Psoas muscle (tissue), 8 donors: ENCODE measurements at regions of chr9 and their contacts with region 1.

Region 1: DNA sequence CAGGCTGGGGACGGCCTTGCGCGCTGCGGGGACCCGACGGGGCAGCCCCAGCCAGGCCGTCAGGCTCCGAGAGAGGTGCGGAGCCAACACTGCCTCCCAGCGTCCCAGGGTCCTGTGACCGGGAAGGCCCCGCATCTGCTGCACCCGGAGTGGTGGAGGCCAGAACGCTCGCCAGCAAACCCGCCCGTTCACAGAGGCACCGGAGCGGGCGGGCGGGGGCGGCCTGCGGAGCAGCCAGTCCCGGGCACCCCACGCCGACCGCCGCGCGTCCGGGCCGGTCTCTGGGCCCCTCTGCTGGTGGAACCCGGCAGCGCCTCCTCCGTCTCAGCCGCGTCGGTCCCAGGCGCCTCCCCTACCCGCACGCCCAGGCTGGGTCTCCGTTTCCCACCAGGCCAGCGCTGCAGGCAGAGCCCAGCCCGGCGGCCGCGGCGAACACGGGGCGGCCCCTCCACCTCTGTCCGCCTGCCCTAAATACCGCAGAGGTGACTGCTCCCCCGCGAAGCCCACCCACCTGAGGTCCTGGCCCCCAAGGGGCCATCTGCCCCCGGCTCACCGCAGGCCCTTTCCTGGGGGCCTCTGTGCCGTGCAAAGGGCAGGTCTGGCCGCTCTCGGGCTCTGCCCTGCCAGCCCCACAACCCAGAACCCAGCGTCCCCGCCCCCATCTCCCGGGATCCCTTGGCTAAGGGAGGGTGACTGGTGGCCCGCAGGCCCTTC is 15.9 kb downstream of the EXD3 start:
- DNase-seq: peak; percentile 77 to 81
- ATAC-seq: peak; percentile 82 to 90 (median 86)
- H3K4me3 ChIP-seq: peak overlapping the region; percentile 57
- H3K27ac ChIP-seq: peak overlapping the region; percentile 41
- H3K4me1 ChIP-seq: peaks cover 26% of the 10 kb centered on the region
- H3K27me3 ChIP-seq: peaks cover 0 to 7% (median 0%) of the 10 kb centered on the region in 3 donors
- CTCF ChIP-seq: peak; percentile 84

Region 2: DNA sequence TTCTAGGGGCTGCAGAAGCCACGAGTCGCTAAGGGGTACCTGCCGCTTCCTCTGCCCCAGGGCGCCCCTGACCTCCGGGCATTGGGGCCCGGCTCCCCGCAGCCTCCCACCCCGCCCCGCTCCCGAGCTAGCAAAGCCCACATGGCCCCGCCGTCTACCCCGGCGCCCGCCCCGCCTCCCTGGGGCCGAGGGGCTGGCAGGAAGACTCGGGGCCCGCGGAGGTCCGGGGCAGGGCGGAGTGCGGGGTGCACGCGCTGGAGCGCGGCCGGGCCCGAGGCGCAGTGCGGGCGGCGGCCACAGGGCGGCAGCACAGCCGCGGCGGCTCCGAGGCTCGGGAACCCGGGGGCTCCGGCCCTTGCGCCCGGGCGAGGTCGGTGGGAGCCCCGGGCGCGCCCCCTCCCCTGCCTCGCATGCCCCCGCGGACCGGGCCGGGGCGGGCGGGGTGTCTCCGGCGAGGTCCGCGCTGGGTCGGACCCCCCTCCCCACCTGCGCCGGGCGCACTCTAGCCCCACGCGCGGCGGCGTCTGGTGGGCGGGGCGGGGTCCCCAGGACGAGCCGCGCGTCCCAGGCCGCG is 111.7 kb before region 1 on chr9:
- intact Hi-C with region 1: loop called (anchors 2 to 5 kb)
- DNase-seq: no peak
- ATAC-seq: peak; percentile 55 to 78 (median 73)
- H3K4me3 ChIP-seq: peak overlapping the region; percentile 59
- H3K27ac ChIP-seq: peak overlapping the region; percentile 58
- H3K4me1 ChIP-seq: peaks cover under 1% of the 10 kb centered on the region
- H3K27me3 ChIP-seq: peaks cover 0 to 74% (median 32%) of the 10 kb centered on the region in 3 donors
- CTCF ChIP-seq: peak; percentile 77

Region 3: DNA sequence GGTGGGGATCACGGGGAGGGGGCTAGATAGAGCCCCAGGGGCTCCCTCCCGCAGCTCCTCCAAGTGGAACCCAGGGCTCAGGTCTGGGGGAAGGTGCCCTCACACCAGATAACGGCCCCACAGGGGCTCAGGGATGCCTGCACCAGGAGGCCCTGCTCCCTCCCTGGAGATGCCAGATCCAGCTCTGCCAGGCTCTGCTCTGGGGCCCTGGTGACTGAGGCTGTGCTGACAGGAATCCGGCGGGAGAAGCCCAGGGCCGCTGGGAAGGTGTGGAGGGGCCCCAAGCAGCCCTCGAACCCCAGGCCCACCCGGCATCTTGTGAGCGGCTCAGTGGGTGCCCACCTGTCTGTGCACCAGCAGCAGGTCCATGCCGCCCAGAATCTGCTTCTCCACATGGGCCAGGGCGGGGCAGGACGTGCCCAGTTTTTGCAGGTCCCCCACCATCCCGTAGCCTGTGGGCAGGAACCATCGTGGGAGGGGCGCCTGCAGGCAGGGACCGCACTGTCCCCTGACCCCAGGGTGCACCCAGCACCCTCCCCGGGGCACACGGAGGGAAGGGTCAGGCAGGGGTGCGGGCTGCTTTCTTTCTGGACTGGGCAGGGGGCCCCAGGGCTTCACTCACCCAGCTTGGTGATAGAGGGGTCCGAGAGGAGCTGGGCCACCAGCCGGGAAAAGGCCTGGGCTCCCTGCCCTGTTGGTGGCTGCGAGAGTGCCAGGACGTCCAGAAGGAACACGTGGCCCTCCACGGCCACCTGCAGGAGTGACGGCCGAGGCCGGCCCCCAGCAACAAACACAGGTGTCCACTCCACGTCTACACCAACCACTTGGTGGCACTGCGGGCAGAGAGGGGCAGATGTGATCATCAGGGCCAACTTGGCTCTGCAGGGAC is 56.1 kb before region 1 on chr9:
- intact Hi-C with region 1: loop called in 1 of 2 experiments (anchors 2 kb)
- DNase-seq: no peak
- ATAC-seq: peak in 1 of 4 donors; percentile 34
- H3K4me3 ChIP-seq: no peak overlapping the region
- H3K27ac ChIP-seq: no peak overlapping the region
- H3K4me1 ChIP-seq: no peaks in the 10 kb centered on the region
- H3K27me3 ChIP-seq: no peaks in the 10 kb centered on the region
- CTCF ChIP-seq: no peak

Region 4: GRCh38 chr9:137390543-137391410 is 16.3 kb before region 1 on chr9:
- intact Hi-C with region 1: no loop called
- DNase-seq: peak; percentile 42 to 70
- ATAC-seq: peak; percentile 60 to 92 (median 81)
- H3K4me3 ChIP-seq: no peak overlapping the region
- H3K27ac ChIP-seq: peak overlapping the region; percentile 38
- H3K4me1 ChIP-seq: peaks cover 7% of the 10 kb centered on the region
- H3K27me3 ChIP-seq: no peaks in the 10 kb centered on the region
- CTCF ChIP-seq: no peak

Region 5: DNA sequence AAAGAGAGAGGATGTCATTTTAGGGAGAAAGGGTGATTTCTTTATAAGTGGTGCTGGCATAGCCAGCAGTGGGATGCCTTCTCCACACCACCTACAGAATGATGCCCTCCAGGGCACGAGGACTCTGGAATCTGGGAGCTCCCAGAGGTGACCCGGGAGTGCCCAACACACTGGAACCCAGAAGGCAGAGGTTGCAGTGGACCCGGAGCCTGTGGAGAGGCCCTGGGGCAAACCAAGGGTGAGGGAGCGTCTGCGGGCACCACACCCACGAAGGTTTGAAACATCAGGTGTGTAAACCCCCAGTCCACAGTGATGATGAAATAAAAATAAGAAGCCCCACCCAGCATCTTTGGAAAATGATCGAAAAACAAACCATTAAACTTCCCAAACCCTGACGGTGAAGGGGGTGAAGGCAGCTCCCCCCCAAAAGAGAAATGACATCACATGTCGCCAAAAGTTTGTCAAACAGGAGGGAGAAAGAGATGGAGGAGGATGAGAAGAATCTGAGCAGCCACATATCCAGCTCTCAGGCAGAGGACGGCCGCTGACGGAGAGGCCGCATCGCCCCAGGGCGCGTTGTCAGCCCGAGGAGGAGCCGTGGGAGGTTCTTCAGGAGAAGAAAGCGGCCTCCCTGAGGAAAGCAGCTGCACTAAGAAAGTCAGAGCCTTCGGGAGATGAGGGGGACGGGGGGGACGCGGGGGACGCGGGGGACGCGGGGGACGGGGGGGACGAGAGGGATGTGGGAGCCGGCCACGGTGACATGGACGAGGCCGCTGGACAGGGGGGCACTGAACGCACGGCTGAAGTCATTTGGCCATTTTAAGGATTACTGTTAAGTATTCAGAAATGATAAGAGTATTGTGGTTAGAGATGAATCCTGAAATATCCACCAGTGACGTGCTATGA is 95.2 kb after region 1 on chr9:
- intact Hi-C with region 1: no loop called
- DNase-seq: no peak
- ATAC-seq: no peak
- H3K4me3 ChIP-seq: no peak overlapping the region
- H3K27ac ChIP-seq: no peak overlapping the region
- H3K4me1 ChIP-seq: no peaks in the 10 kb centered on the region
- H3K27me3 ChIP-seq: no peaks in the 10 kb centered on the region
- CTCF ChIP-seq: no peak